ENCODE measurements at regions of chr10 and their contacts with region 1.

Region 1: GRCh38 chr10:114550756-114551635 is 107.1 kb downstream of the ABLIM1 start:
- DNase-seq: no peak
- H3K4me3 Mint-ChIP-seq: no peak overlapping the region
- H3K27ac Mint-ChIP-seq: no peak overlapping the region
- H3K4me1 Mint-ChIP-seq: peaks cover 34% of the 10 kb centered on the region
- H3K27me3 Mint-ChIP-seq: peaks cover 10% of the 10 kb centered on the region

Region 2: GRCh38 chr10:114526504-114527238 is 24.3 kb before region 1 on chr10:
- CTCF ChIA-PET with region 1: interaction called, 184 read pairs
- DNase-seq: peak; percentile 95
- H3K4me3 Mint-ChIP-seq: peak overlapping the region; percentile 95
- H3K27ac Mint-ChIP-seq: peak overlapping the region; percentile 98
- H3K4me1 Mint-ChIP-seq: peaks cover 64% of the 10 kb centered on the region
- H3K27me3 Mint-ChIP-seq: peaks cover 4% of the 10 kb centered on the region

Region 3: GRCh38 chr10:114694752-114695151 is 143.8 kb after region 1 on chr10:
- CTCF ChIA-PET with region 1: interaction called, 60 read pairs
- DNase-seq: peak; percentile 30
- H3K4me3 Mint-ChIP-seq: no peak overlapping the region
- H3K27ac Mint-ChIP-seq: no peak overlapping the region
- H3K4me1 Mint-ChIP-seq: peaks cover 11% of the 10 kb centered on the region
- H3K27me3 Mint-ChIP-seq: peaks cover 36% of the 10 kb centered on the region

Region 4: GRCh38 chr10:114703377-114704107 is 152.5 kb after region 1 on chr10:
- CTCF ChIA-PET with region 1: interaction called, 21 read pairs
- DNase-seq: peak; percentile 27
- H3K4me3 Mint-ChIP-seq: no peak overlapping the region
- H3K27ac Mint-ChIP-seq: no peak overlapping the region
- H3K4me1 Mint-ChIP-seq: no peaks in the 10 kb centered on the region
- H3K27me3 Mint-ChIP-seq: peaks cover 18% of the 10 kb centered on the region